A549 (cell line): ENCODE measurements at regions of chr14 and their contacts with region 1.

Region 1: GRCh38 chr14:70972107-70972976 is 65.1 kb downstream of the PCNX1 start:
- DNase-seq: peak; percentile 21 to 86
- ATAC-seq: peak; percentile 94 to 97
- H3K4me3 ChIP-seq: no peak overlapping the region
- H3K27ac ChIP-seq: no peak overlapping the region
- H3K4me1 ChIP-seq: 0 out of 3 replicates have a peak, but pooled peaks cover under 1% of the 10 kb centered on the region
- CTCF ChIP-seq: peak; percentile 95
- EP300 ChIP-seq: no peak
- POLR2A ChIP-seq: no peak
- RAD21 ChIP-seq: peak; percentile 80 to 87

Region 2: DNA sequence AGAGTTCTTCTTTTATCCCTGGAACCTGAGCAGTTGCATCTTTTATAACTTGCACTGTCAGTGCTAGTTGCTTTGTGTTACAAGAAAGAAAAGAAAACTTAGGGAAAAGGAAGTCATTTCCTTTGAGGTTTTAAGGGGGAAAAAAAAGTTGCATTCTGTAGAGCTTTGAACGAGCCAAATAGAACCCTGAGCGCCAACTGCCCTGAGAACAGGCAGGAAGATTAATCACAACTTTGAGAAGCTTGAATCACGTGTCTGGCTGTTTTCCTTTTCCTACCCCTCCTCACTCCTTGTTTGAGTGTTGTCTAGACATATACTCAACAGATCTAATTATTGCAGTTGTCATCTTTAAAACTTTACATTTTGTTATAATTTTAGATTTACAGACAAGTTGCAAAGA is 52.6 kb before region 1 on chr14:
- CTCF ChIA-PET with region 1: interaction called, 10 read pairs
- POLR2A ChIA-PET with region 1: no interaction called
- DNase-seq: no peak
- ATAC-seq: no peak
- H3K4me3 ChIP-seq: no peak overlapping the region
- H3K27ac ChIP-seq: no peak overlapping the region
- H3K4me1 ChIP-seq: peaks cover 29% of the 10 kb centered on the region
- CTCF ChIP-seq: no peak
- EP300 ChIP-seq: no peak
- POLR2A ChIP-seq: no peak
- RAD21 ChIP-seq: no peak

Region 3: GRCh38 chr14:70955543-70956480 is 16.5 kb before region 1 on chr14:
- CTCF ChIA-PET with region 1: interaction called, 12 read pairs
- POLR2A ChIA-PET with region 1: no interaction called
- DNase-seq: peak in 1 of 2 experiments; percentile 23
- ATAC-seq: peak; percentile 71 to 79; a peak in 5 of 6 replicates
- H3K4me3 ChIP-seq: no peak overlapping the region
- H3K27ac ChIP-seq: no peak overlapping the region
- H3K4me1 ChIP-seq: peaks cover 6% of the 10 kb centered on the region; the same call in 1 of the 3 replicates
- CTCF ChIP-seq: peak; percentile 66
- EP300 ChIP-seq: no peak
- POLR2A ChIP-seq: no peak
- RAD21 ChIP-seq: peak; percentile 72 to 75

Region 4: DNA sequence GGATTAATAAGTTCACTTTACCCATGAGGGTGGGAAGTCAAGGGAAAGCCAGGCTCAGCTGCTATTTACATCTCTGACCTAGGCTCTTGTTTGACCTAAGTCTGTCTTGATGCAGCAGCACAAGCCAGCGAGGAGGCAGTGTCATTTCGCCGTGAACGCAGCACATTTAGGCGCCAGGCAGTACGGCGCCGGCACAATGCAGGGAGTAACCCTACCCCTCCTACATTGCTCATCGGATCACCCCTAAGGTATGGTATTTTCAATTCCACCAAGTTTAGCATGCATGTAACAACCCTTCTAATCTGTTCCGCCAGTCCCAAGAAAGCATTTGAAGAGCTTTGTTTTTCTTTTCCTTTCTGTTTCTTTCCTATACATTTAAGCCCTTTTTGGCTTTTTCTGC is 16.1 kb after region 1 on chr14:
- CTCF ChIA-PET with region 1: interaction called, 11 read pairs
- POLR2A ChIA-PET with region 1: no interaction called
- DNase-seq: no peak
- ATAC-seq: no peak
- H3K4me3 ChIP-seq: no peak overlapping the region
- H3K27ac ChIP-seq: no peak overlapping the region
- H3K4me1 ChIP-seq: no peaks in the 10 kb centered on the region
- CTCF ChIP-seq: no peak
- EP300 ChIP-seq: no peak
- POLR2A ChIP-seq: no peak
- RAD21 ChIP-seq: no peak